K562 (cell line): ENCODE measurements at regions of chr19 and their contacts with region 1.

Region 1: GRCh38 chr19:8355631-8356402 is 8.1 kb upstream of the ANGPTL4 start:
- DNase-seq: peak; percentile 37 to 86 (median 57)
- ATAC-seq: peak; percentile 87
- H3K4me3 ChIP-seq: no peak overlapping the region
- H3K27ac ChIP-seq: peak overlapping the region; percentile 30; the same call in 2 of the 3 replicates
- H3K4me1 ChIP-seq: peaks cover 9 to 18% of the 10 kb centered on the region in 2 experiments; a peak in 4 of 5 replicates
- H3K27me3 ChIP-seq: peaks cover 2 to 7% of the 10 kb centered on the region in 2 experiments; a peak in 3 of 5 replicates
- CTCF ChIP-seq: peak; percentile 22 to 37 (median 27); a peak in 4 of 6 replicates
- EP300 ChIP-seq: 0 out of 2 replicates have a peak, but pooled peaks have one; percentile 14
- POLR2A ChIP-seq: no peak
- RAD21 ChIP-seq: peak in 1 of 2 experiments; percentile 57; a peak in 2 of 4 replicates

Region 2: DNA sequence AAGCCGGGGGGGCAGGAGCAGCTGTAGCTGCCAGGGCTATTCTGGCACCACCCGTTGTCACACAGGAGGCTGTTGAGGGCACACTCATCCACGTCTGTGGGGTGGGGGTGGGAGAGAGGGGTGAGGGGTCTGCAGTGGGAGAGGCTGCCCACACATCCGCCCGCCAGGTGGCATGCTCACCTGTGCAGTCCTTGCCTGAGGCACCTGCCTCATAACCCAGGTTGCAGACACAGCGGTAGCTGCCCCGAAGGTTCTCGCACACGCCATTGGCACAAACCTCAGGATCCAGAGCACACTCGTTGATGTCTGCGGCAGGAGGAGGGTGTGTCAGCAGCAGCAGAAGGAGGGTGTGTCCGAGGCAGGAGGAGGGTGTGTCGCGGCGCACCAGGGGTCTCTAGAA is 226.8 kb before region 1 on chr19:
- CTCF ChIA-PET with region 1: no interaction called
- POLR2A ChIA-PET with region 1: no interaction called
- in situ Hi-C with region 1: no loop called
- intact Hi-C with region 1: no loop called
- DNase-seq: no peak
- ATAC-seq: no peak
- H3K4me3 ChIP-seq: no peak overlapping the region
- H3K27ac ChIP-seq: no peak overlapping the region
- H3K4me1 ChIP-seq: peaks cover 0 to 19% of the 10 kb centered on the region in 2 experiments; a peak in 2 of 5 replicates
- H3K27me3 ChIP-seq: peaks cover 50 to 82% of the 10 kb centered on the region in 2 experiments
- CTCF ChIP-seq: no peak
- EP300 ChIP-seq: no peak
- POLR2A ChIP-seq: no peak
- RAD21 ChIP-seq: no peak

Region 3: DNA sequence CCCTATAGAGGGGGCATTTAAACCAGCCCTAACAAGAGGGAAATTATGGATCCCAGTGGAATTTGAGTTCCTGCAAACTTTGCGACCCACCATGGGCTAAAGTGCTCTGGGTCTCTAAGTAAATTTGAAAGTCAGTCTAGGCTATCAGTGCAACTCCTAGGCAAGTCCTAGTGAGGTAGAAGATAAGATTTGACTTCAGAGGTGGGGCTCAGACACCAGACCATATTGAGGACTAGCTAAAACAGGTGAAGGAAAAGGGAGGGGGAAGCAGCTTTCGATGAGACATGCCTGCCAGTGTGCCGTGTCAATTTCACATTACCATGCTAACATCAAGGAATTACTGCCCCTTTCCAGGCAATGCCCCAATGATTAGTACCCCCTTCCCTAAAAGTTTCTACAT is 86.1 kb before region 1 on chr19:
- CTCF ChIA-PET with region 1: no interaction called
- POLR2A ChIA-PET with region 1: no interaction called
- in situ Hi-C with region 1: no loop called
- intact Hi-C with region 1: no loop called
- DNase-seq: no peak
- ATAC-seq: no peak; the same call in 1 of the 3 replicates
- H3K4me3 ChIP-seq: no peak overlapping the region
- H3K27ac ChIP-seq: no peak overlapping the region
- H3K4me1 ChIP-seq: peaks cover 6 to 9% of the 10 kb centered on the region in 2 experiments; a peak in 4 of 5 replicates
- H3K27me3 ChIP-seq: no peaks in the 10 kb centered on the region
- CTCF ChIP-seq: no peak
- EP300 ChIP-seq: no peak
- POLR2A ChIP-seq: no peak
- RAD21 ChIP-seq: no peak

Region 4: DNA sequence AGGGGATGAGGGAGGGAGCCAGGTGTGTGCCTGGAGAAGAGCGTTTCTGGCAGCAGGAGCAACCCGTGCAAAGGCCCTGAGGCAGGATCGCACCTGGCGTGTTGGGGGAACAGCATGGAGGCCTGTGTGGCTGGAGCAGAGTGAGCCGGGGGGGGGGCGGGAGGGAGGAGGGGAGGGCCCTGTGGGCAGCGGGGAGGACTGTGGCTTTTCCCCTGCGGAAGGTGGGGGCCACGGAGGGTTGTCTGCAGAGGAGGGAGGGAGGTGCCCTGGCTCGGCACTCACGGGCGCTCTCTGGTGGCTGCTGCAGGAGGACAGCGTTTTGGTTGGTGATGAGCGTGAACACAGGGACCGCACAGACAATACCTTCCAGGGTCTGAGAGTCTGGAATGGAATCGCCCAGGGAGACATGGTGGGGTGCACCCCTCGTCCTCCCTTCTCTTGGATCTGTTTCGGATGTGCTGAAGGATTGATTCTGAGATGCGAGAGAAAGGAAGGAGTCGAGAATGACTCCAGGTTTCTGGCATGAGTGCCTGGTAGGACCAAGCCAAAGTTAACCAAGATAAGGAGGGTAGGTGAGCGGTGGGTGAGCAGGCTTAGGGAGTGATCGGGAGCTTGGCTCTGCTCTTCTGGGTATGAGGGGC is 40.9 kb after region 1 on chr19:
- CTCF ChIA-PET with region 1: interaction called, 5 read pairs
- POLR2A ChIA-PET with region 1: interaction called, 5 read pairs
- in situ Hi-C with region 1: loop called (anchors 5 kb)
- intact Hi-C with region 1: loop called (anchors 1 kb)
- DNase-seq: peak; percentile 84 to 91 (median 86)
- ATAC-seq: peak; percentile 98
- H3K4me3 ChIP-seq: no peak overlapping the region
- H3K27ac ChIP-seq: no peak overlapping the region
- H3K4me1 ChIP-seq: peaks cover 15 to 59% of the 10 kb centered on the region in 2 experiments; a peak in 4 of 5 replicates
- H3K27me3 ChIP-seq: no peaks in the 10 kb centered on the region
- CTCF ChIP-seq: peak; percentile 81 to 95 (median 91)
- EP300 ChIP-seq: no peak
- POLR2A ChIP-seq: no peak
- RAD21 ChIP-seq: peak; percentile 66 to 88